ENCODE measurements at regions of chr4 and their contacts with region 1.

Region 1: GRCh38 chr4:112031712-112032328 is 113.4 kb upstream of the FAM241A start:
- DNase-seq: no peak
- H3K4me3 ChIP-seq: no peak overlapping the region
- H3K27ac ChIP-seq: no peak overlapping the region
- H3K4me1 ChIP-seq: no peaks in the 10 kb centered on the region
- H3K27me3 ChIP-seq: no peaks in the 10 kb centered on the region
- CTCF ChIP-seq: peak; percentile 23 to 62 (median 46)
- POLR2A ChIP-seq: no peak

Region 2: DNA sequence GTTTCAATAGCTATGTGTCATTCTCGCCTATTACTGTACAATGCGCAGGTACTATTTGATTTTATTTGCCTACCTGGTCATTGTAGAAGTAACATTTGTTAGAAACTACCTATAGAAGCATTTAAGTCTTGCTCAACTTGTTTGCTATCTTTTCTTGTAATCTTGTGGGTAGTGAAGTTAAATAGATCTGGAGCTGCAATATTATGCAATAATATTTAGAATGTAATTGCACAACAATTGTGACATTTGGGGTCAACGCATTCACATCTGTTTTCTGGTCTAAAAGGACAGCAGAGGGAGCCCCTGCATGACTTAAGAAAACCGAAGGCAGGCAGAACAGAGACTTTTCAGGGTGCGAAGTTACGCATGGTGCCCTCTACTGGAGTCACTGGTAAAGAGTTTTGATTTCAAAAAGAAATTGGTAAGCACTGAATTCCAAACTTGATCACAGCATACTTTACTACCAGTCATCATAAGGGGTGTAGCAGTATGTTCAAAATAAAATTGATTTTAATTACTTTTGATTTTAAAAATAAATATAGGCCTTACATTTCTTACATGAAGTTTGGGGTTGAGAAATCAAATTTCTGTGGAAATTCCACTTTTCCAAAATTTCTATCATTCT is 389.8 kb before region 1 on chr4:
- intact Hi-C with region 1: loop called (anchors 5 kb)
- DNase-seq: peak; percentile 60
- H3K4me3 ChIP-seq: no peak overlapping the region
- H3K27ac ChIP-seq: no peak overlapping the region
- H3K4me1 ChIP-seq: no peaks in the 10 kb centered on the region
- H3K27me3 ChIP-seq: no peaks in the 10 kb centered on the region
- CTCF ChIP-seq: peak in 3 of 4 experiments; percentile 72 to 81 (median 76)
- POLR2A ChIP-seq: no peak

Region 3: GRCh38 chr4:111854494-111855087 is 177.2 kb before region 1 on chr4:
- intact Hi-C with region 1: loop called (anchors 10 kb)
- DNase-seq: peak; percentile 30
- H3K4me3 ChIP-seq: no peak overlapping the region
- H3K27ac ChIP-seq: no peak overlapping the region
- H3K4me1 ChIP-seq: no peaks in the 10 kb centered on the region
- H3K27me3 ChIP-seq: no peaks in the 10 kb centered on the region
- CTCF ChIP-seq: peak in 3 of 4 experiments; percentile 51 to 59 (median 53)
- POLR2A ChIP-seq: no peak

Region 4: GRCh38 chr4:111943795-111944203 is 88.0 kb before region 1 on chr4:
- intact Hi-C with region 1: loop called (anchors 10 kb)
- DNase-seq: no peak
- H3K4me3 ChIP-seq: no peak overlapping the region
- H3K27ac ChIP-seq: no peak overlapping the region
- H3K4me1 ChIP-seq: no peaks in the 10 kb centered on the region
- H3K27me3 ChIP-seq: no peaks in the 10 kb centered on the region
- CTCF ChIP-seq: peak in 2 of 4 experiments; percentile 31 to 41
- POLR2A ChIP-seq: no peak

Measured in prostate gland (tissue), 2 donors.